Uterus (tissue), 4 donors: ENCODE measurements at regions of chr10 and their contacts with region 1.

Region 1: GRCh38 chr10:80205478-80206276 is at the start of gene ANXA11:
- DNase-seq: peak; percentile 79 to 86
- H3K4me3 ChIP-seq: peak within 1 kb of the TSS; percentile 48 to 93
- H3K27ac ChIP-seq: peak within 1 kb of the TSS; percentile 97 to 99
- H3K4me1 ChIP-seq: peaks cover 5 to 9% of the 10 kb centered on the region in 2 donors
- H3K27me3 ChIP-seq: no peaks in the 10 kb centered on the region
- CTCF ChIP-seq: peak in 1 of 4 experiments; percentile 7
- POLR2A ChIP-seq: peak; percentile 88 to 94
- total RNA-seq, gene ANXA11: 15.6 to 157 (median 47.2) TPM

Region 2: GRCh38 chr10:80158598-80159127 is 47.0 kb before region 1 on chr10:
- intact Hi-C with region 1: loop called (anchors 5 kb)
- DNase-seq: peak; percentile 84 to 92
- H3K4me3 ChIP-seq: no peak overlapping the region
- H3K27ac ChIP-seq: peak overlapping the region; percentile 81 to 90
- H3K4me1 ChIP-seq: peaks cover 12 to 17% of the 10 kb centered on the region in 2 donors
- H3K27me3 ChIP-seq: no peaks in the 10 kb centered on the region
- CTCF ChIP-seq: peak in 1 of 4 experiments; percentile 26
- POLR2A ChIP-seq: no peak

Region 3: GRCh38 chr10:80324086-80324485 is 118.4 kb after region 1 on chr10:
- intact Hi-C with region 1: no loop called
- DNase-seq: no peak
- H3K4me3 ChIP-seq: no peak overlapping the region
- H3K27ac ChIP-seq: no peak overlapping the region
- H3K4me1 ChIP-seq: no peaks in the 10 kb centered on the region
- H3K27me3 ChIP-seq: no peaks in the 10 kb centered on the region
- CTCF ChIP-seq: no peak
- POLR2A ChIP-seq: no peak